ENCODE measurements at regions of chr15 and their contacts with region 1.

Region 1: DNA sequence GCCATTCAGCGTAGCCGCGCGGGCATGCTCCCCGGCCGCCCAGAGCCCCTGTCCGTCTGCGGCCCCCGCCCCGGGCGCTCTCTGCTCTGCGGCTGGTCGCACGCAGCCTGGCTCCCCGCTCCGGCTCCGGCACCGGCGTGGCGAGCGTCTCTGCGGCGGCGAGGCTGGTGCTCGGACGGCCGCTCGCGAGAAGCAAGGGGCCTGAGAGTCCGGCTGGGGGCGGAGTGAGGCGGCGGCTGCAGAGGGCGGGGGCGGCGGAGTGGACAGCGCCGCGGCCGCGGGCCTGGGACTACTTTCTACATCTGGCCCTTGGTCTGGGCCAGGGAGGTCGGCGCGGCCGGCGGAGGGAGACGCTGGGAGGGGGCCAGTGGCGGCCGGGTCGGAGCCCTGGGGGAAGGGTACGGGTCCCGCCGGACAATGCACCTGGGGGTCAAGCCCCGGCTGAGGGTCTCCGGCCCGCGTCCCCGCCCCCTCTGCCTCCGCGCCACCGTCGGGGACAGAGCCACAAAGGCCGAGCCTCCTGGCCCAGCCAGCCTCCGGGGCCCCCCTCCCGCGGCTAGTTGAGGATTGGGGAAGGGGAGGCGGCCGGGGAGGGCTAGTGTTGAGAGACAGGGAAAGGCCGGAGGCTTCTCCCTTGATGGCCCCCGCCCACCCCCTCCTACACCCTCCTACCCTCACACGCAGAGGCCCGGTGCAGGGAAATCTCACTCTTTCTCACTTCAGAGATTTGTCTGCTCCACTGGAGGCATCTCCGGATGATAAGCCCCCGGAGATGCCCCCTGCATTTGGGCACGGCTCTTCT is at the start of gene PRTG:
- DNase-seq: no peak
- ATAC-seq: no peak
- H3K4me3 ChIP-seq: peak within 1 kb of the TSS; percentile 44
- H3K4me3 Mint-ChIP-seq: peak within 1 kb of the TSS in 9 of 10 donors; percentile 53 to 76 (median 68)
- H3K27ac ChIP-seq: no peak within 1 kb of the TSS
- H3K27ac Mint-ChIP-seq: no peak within 1 kb of the TSS
- H3K4me1 ChIP-seq: peaks cover 0 to 7% of the 10 kb centered on the region in 2 donors
- H3K4me1 Mint-ChIP-seq: peaks cover 0 to 5% (median 5%) of the 10 kb centered on the region in 7 donors
- H3K27me3 ChIP-seq: peaks cover 8 to 14% of the 10 kb centered on the region in 2 donors
- H3K27me3 Mint-ChIP-seq: peaks cover 29 to 47% (median 32%) of the 10 kb centered on the region in 5 donors
- total RNA-seq, gene PRTG: not detected

Region 2: DNA sequence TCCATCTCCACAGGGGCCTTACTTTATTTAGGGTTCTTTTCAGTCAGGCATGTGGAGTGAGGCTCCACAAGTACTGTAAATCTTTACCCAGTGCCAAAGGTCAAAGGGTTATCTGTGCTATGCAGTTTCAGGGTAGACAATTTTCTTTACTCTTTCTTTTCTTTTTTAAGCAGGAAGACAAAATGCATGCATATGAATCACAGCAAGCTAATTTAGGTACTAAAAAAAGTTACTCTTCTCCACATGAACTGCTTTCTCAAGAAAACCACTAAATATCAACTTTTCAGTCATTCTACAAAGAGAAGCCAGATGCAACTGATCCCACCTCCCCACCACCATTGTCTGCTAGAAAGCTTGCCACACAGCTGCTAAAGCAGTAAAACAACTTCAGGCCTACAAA is 81.7 kb before region 1 on chr15:
- CTCF ChIA-PET with region 1: no interaction called
- POLR2A ChIA-PET with region 1: no interaction called
- intact Hi-C with region 1: loop called in 1 of 2 experiments (anchors 10 kb)
- DNase-seq: no peak
- ATAC-seq: no peak
- H3K4me3 ChIP-seq: no peak overlapping the region
- H3K4me3 Mint-ChIP-seq: no peak overlapping the region
- H3K27ac ChIP-seq: no peak overlapping the region
- H3K27ac Mint-ChIP-seq: no peak overlapping the region
- H3K4me1 ChIP-seq: no peaks in the 10 kb centered on the region
- H3K4me1 Mint-ChIP-seq: peaks cover 0 to 8% (median 0%) of the 10 kb centered on the region in 7 donors
- H3K27me3 ChIP-seq: no peaks in the 10 kb centered on the region
- H3K27me3 Mint-ChIP-seq: no peaks in the 10 kb centered on the region

Region 3: DNA sequence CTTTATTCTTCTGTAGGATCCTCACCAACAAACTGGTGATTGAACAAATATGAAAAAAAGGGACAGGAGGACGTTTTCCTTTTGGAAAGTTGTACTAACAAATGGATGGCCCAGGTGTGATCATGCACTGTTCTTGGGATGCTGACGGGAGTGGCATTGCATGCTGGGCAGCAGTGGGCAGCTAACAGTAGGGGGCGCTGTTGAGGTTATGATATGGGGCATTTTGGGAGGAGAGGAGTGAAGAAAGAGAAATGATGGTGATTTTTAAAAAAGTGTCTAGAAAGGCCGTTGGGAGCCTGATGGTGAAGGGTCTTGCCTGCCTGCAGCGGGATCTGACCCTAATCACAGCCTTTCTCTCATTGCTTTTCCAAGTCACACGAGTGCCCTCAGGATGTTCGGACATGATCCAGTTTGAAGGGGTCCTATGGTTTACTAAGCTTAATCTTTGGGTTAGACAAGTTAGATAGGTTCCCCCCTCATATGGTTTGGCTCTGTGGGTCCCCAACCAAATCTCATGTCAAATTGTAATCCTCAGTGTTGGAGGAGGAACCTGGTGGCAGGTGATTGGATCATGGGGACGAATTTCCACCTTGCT is 46.0 kb after region 1 on chr15:
- CTCF ChIA-PET with region 1: no interaction called
- POLR2A ChIA-PET with region 1: no interaction called
- intact Hi-C with region 1: no loop called
- DNase-seq: peak in 5 of 9 donors; percentile 3 to 61 (median 21)
- ATAC-seq: no peak
- H3K4me3 ChIP-seq: no peak overlapping the region
- H3K4me3 Mint-ChIP-seq: no peak overlapping the region
- H3K27ac ChIP-seq: no peak overlapping the region
- H3K27ac Mint-ChIP-seq: no peak overlapping the region
- H3K4me1 ChIP-seq: no peaks in the 10 kb centered on the region
- H3K4me1 Mint-ChIP-seq: no peaks in the 10 kb centered on the region
- H3K27me3 ChIP-seq: no peaks in the 10 kb centered on the region
- H3K27me3 Mint-ChIP-seq: peaks cover 3 to 19% (median 12%) of the 10 kb centered on the region in 5 donors